ENCODE measurements at regions of chr17 and their contacts with region 1.

Region 1: GRCh38 chr17:77068915-77069314 is 71.9 kb upstream of the SEC14L1 start:
- DNase-seq: no peak
- H3K4me3 Mint-ChIP-seq: no peak overlapping the region
- H3K27ac Mint-ChIP-seq: no peak overlapping the region
- H3K4me1 Mint-ChIP-seq: no peaks in the 10 kb centered on the region
- H3K27me3 Mint-ChIP-seq: peaks cover 62% of the 10 kb centered on the region
- CTCF ChIP-seq: no peak

Region 2: DNA sequence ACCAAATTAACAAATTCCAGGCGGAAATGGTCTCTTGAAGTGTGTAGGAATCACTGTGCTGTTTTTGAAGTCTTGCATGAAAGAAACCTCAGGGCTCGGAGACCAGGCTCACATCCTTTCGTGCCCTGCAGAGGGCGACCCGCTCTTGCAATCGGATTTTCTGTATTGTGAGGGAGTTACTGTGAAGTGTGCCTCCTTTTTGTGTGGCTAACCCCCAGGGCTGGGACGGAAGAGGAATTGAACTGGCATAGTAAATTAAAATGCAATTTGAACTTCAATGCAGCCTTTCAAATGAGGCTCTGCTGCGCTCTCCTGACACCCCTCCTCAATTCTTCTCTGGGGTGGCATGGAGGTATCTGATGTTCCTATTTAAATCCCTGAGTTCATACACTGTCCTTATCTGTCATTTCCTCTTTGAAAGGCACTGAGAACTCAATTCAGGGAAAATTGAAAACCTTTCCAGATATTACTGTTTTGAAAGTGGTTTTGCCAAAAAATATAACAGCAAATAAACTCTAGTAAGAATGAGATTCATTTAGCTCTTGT is 252.3 kb before region 1 on chr17:
- CTCF ChIA-PET with region 1: interaction called, 5 read pairs
- POLR2A ChIA-PET with region 1: no interaction called
- intact Hi-C with region 1: loop called (anchors 2 kb)
- DNase-seq: peak; percentile 58
- H3K4me3 Mint-ChIP-seq: no peak overlapping the region
- H3K27ac Mint-ChIP-seq: no peak overlapping the region
- H3K4me1 Mint-ChIP-seq: peaks cover 5% of the 10 kb centered on the region
- H3K27me3 Mint-ChIP-seq: peaks cover 26% of the 10 kb centered on the region
- CTCF ChIP-seq: peak; percentile 59

Region 3: GRCh38 chr17:76868176-76868668 is 200.7 kb before region 1 on chr17 and contains the start of gene MGAT5B:
- CTCF ChIA-PET with region 1: interaction called, 24 read pairs
- POLR2A ChIA-PET with region 1: interaction called, 9 read pairs
- intact Hi-C with region 1: loop called (anchors 1 kb)
- DNase-seq: peak; percentile 71
- H3K4me3 Mint-ChIP-seq: peak within 1 kb of the TSS; percentile 58
- H3K27ac Mint-ChIP-seq: no peak within 1 kb of the TSS
- H3K4me1 Mint-ChIP-seq: peaks cover 25% of the 10 kb centered on the region
- H3K27me3 Mint-ChIP-seq: no peaks in the 10 kb centered on the region
- CTCF ChIP-seq: peak; percentile 84
- total RNA-seq, gene MGAT5B: 1.3 and 1.7 TPM in 2 replicates

Region 4: GRCh38 chr17:77011173-77012011 is 57.5 kb before region 1 on chr17:
- CTCF ChIA-PET with region 1: interaction called, 18 read pairs
- POLR2A ChIA-PET with region 1: no interaction called
- intact Hi-C with region 1: loop called (anchors 1 kb)
- DNase-seq: peak; percentile 54
- H3K4me3 Mint-ChIP-seq: no peak overlapping the region
- H3K27ac Mint-ChIP-seq: no peak overlapping the region
- H3K4me1 Mint-ChIP-seq: no peaks in the 10 kb centered on the region
- H3K27me3 Mint-ChIP-seq: peaks cover 56% of the 10 kb centered on the region
- CTCF ChIP-seq: peak; percentile 51

Measured in MCF 10A (cell line).